IMR-90 (cell line): ENCODE measurements at regions of chr12 and their contacts with region 1.

Region 1: DNA sequence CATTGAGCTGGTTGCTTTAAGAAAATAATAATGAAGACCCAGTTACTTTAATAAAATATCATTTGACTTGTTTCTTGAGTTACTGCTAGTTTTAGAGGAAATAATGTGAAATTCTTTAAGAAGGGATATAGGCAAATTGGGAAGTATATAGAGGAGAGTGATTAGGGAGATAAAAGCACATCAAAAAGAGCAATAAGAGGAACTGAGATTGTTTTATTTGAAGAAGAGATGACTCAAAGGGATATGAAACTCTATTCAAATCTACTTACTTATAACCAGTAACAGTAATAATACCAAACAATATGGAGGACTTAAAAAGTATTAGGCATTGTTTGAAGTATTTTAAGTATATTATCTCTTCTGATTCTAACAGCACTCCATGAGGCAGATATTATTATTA is 37.1 kb downstream of the LRRK2 start:
- DNase-seq: no peak
- ATAC-seq: no peak
- H3K4me3 ChIP-seq: no peak overlapping the region
- H3K27ac ChIP-seq: no peak overlapping the region
- H3K4me1 ChIP-seq: no peaks in the 10 kb centered on the region; the same call in 1 of the 2 replicates
- H3K27me3 ChIP-seq: no peaks in the 10 kb centered on the region
- CTCF ChIP-seq: no peak
- POLR2A ChIP-seq: no peak
- RAD21 ChIP-seq: no peak

Region 2: GRCh38 chr12:40181490-40181889 is 80.4 kb before region 1 on chr12:
- CTCF ChIA-PET with region 1: no interaction called
- POLR2A ChIA-PET with region 1: no interaction called
- dilution Hi-C with region 1: no loop called
- in situ Hi-C with region 1: no loop called
- intact Hi-C with region 1: no loop called
- DNase-seq: no peak
- ATAC-seq: no peak
- H3K4me3 ChIP-seq: no peak overlapping the region
- H3K27ac ChIP-seq: no peak overlapping the region
- H3K4me1 ChIP-seq: no peaks in the 10 kb centered on the region
- H3K27me3 ChIP-seq: no peaks in the 10 kb centered on the region
- CTCF ChIP-seq: no peak
- POLR2A ChIP-seq: no peak
- RAD21 ChIP-seq: no peak

Region 3: DNA sequence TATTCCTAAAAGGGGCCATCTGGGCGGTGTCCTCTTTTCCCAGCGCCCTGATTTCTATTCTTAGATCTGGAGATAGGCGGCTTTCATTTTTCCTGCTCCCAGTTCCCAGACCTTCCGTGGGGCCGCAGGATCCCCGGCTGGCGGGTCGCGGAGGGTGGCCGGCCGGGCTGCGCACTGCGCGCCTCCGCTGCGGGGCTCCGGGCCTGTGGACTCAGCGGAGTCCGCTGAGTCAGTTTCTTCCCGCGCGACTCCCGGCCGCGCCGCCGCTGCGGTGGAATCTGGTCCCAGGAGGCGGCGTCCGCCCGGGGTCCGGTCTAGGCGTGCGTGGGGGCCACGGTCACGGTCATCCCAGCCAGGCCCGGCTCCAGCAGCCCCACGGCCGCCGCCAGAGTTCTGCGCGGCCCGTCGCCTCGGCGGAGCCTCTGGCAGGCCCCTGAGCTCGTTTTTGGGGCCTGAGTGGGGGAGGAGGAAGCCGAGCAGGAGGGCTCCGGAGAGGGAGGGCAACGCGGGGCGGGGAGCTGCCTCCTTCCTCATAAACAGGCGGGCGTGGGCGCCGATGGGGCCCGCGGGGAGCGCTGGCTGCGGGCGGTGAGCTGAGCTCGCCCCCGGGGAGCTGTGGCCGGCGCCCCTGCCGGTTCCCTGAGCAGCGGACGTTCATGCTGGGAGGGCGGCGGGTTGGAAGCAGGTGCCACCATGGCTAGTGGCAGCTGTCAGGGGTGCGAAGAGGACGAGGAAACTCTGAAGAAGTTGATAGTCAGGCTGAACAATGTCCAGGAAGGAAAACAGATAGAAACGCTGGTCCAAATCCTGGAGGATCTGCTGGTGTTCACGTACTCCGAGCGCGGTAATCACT is 37.3 kb before region 1 on chr12 and contains the start of gene LRRK2:
- CTCF ChIA-PET with region 1: no interaction called
- POLR2A ChIA-PET with region 1: no interaction called
- dilution Hi-C with region 1: no loop called
- in situ Hi-C with region 1: no loop called
- intact Hi-C with region 1: loop called (anchors 1 kb)
- DNase-seq: peak; percentile 28
- ATAC-seq: peak; percentile 90
- H3K4me3 ChIP-seq: peak within 1 kb of the TSS; percentile 52
- H3K27ac ChIP-seq: peak within 1 kb of the TSS; percentile 35
- H3K4me1 ChIP-seq: peaks cover 2% of the 10 kb centered on the region; the same call in 1 of the 2 replicates
- H3K27me3 ChIP-seq: no peaks in the 10 kb centered on the region
- CTCF ChIP-seq: no peak
- POLR2A ChIP-seq: no peak
- RAD21 ChIP-seq: no peak
- total RNA-seq, gene LRRK2: 0.54 and 1.1 TPM in 2 replicates

Region 4: DNA sequence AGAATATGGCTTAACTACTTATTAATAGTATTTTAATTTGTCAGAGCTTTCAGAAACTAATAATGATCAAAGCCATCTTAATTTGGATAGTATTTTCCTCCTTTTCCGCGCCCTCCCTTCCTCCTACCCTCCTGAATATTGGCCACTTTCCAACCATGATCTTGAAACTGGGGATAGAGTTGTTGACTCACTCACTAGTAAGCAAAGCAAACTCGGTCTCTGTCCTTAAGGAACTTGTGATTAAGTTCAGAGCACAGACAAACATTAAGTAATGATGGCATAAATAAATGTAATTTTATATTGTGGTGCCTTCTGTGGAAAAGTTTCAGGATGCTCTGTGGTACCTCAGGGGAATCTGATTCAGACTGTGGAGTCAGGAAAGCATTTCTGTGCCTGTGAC is 38.6 kb after region 1 on chr12:
- CTCF ChIA-PET with region 1: no interaction called
- POLR2A ChIA-PET with region 1: no interaction called
- dilution Hi-C with region 1: no loop called
- in situ Hi-C with region 1: no loop called
- intact Hi-C with region 1: no loop called
- DNase-seq: peak; percentile 1
- ATAC-seq: no peak
- H3K4me3 ChIP-seq: no peak overlapping the region
- H3K27ac ChIP-seq: no peak overlapping the region
- H3K4me1 ChIP-seq: no peaks in the 10 kb centered on the region
- H3K27me3 ChIP-seq: no peaks in the 10 kb centered on the region
- CTCF ChIP-seq: no peak
- POLR2A ChIP-seq: no peak
- RAD21 ChIP-seq: no peak

Region 5: GRCh38 chr12:40575987-40576386 is 314.1 kb after region 1 on chr12:
- CTCF ChIA-PET with region 1: no interaction called
- POLR2A ChIA-PET with region 1: no interaction called
- dilution Hi-C with region 1: no loop called
- in situ Hi-C with region 1: no loop called
- intact Hi-C with region 1: no loop called
- DNase-seq: no peak
- ATAC-seq: no peak
- H3K4me3 ChIP-seq: no peak overlapping the region
- H3K27ac ChIP-seq: no peak overlapping the region
- H3K4me1 ChIP-seq: no peaks in the 10 kb centered on the region
- H3K27me3 ChIP-seq: no peaks in the 10 kb centered on the region
- CTCF ChIP-seq: no peak
- POLR2A ChIP-seq: no peak
- RAD21 ChIP-seq: no peak